Heart left ventricle (tissue), 16 donors: ENCODE measurements at regions of chr1 and their contacts with region 1.

Region 1: DNA sequence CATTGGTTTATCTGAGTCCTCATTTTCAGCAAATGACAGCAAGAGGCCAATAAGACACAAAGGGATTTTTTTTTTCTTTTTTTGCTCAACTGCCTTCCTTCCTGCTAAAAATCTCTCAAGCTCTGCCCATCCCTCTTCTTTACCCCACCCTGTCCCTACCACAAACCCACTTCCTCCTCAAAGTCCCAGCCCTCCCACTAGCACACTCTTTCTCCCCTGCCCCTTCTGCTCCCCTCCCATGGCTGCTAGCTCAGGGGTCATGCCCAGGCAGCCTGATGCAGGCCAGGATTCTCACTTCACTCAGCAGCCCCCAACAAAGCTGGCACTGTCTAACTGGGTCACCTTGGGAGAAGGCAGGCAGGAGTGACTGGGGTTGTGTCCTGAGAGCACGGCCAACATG is 28.8 kb upstream of the PPP2R5A start:
- DNase-seq: no peak
- ATAC-seq: peak in 3 of 4 donors; percentile 39 to 77 (median 66)
- H3K4me3 ChIP-seq: no peak overlapping the region
- H3K27ac ChIP-seq: peak overlapping the region in 1 of 12 donors; percentile 81
- H3K4me1 ChIP-seq: peaks cover 0 to 37% (median 4%) of the 10 kb centered on the region in 12 donors
- H3K27me3 ChIP-seq: no peaks in the 10 kb centered on the region
- CTCF ChIP-seq: no peak
- POLR2A ChIP-seq: no peak

Region 2: DNA sequence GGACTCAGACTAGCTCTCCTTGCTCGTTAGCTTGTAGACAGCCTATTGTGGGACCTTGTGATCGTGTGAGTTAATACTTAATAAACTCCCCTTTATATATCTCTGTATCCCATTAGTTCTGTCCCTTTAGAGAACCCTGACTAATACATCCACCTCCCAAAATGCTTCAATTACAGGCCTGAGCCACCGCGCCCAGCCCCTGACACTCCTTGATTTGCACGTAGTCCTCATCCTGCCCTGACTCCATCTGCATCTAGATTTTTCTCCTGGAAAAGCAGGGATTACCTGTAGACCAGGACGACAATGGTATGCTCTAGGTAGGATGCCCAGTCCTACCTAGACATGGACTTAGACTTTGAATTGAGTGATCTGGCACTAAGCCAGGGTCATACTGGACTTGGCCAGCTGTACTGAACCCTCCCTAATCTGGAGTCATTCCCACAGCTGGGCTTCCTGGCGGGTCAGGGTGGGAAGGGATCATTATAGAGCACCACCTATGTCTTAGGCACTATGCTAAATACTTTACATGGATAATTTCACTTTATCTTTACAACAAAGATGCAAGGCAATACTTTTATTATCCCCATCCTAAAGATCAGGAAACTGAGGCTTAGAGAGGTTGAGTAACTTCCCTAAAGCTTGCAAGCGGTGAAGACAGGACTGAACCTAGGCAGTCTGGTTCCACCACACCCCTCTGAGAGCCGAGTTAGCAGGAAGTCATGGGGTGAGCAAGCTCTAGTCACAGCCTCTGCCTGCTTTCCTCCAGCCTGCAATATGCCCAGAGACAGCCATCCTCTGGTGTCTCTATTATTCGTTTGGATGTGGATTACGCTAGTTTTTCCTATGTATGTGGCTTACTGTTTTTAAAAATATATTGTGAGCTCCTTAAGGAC is 131.4 kb before region 1 on chr1:
- intact Hi-C with region 1: no loop called
- DNase-seq: no peak
- ATAC-seq: peak in 3 of 4 donors; percentile 67 to 80 (median 79)
- H3K4me3 ChIP-seq: no peak overlapping the region
- H3K27ac ChIP-seq: no peak overlapping the region
- H3K4me1 ChIP-seq: peaks cover 0 to 12% (median 0%) of the 10 kb centered on the region in 12 donors
- H3K27me3 ChIP-seq: no peaks in the 10 kb centered on the region
- CTCF ChIP-seq: no peak
- POLR2A ChIP-seq: no peak

Region 3: DNA sequence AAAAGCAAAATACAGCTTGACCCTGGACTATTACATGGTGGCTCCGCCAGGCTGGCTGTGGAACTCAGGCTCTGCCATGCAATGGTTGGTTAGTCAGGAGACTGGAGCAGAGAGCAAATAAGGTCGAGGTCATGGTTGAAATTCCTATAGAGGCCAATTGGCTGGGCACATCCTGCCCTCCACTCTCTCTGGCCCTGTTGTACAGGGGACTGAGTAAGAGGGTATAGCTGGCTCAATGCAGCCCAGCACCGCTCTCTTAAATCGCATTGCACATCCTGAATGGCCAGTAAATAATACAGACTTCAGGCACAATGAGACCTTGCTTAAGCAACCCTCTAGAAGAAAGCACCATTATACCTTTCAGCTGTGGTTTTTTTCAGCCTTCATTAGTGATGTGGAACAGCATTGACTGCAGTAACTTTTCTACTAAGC is 30.5 kb before region 1 on chr1:
- intact Hi-C with region 1: loop called in 1 of 10 experiments (anchors 2 kb)
- DNase-seq: no peak
- ATAC-seq: peak in 2 of 4 donors; percentile 14 to 48
- H3K4me3 ChIP-seq: no peak overlapping the region
- H3K27ac ChIP-seq: peak overlapping the region in 6 of 12 donors; percentile 8 to 52 (median 32)
- H3K4me1 ChIP-seq: peaks cover 0 to 19% (median 8%) of the 10 kb centered on the region in 12 donors
- H3K27me3 ChIP-seq: no peaks in the 10 kb centered on the region
- CTCF ChIP-seq: no peak
- POLR2A ChIP-seq: no peak